Activated naive CD4-positive, alpha-beta T cell treated with anti-CD3 and anti-CD28 coated beads for 36 hours (primary cell): ENCODE measurements at regions of chr1 and their contacts with region 1.

Region 1: GRCh38 chr1:224851210-224851847 is 78.1 kb upstream of the DNAH14 start:
- DNase-seq: peak; percentile 74
- H3K4me3 Mint-ChIP-seq: no peak overlapping the region
- H3K27ac Mint-ChIP-seq: no peak overlapping the region
- H3K4me1 Mint-ChIP-seq: no peaks in the 10 kb centered on the region
- H3K27me3 Mint-ChIP-seq: peaks cover 6% of the 10 kb centered on the region

Region 2: DNA sequence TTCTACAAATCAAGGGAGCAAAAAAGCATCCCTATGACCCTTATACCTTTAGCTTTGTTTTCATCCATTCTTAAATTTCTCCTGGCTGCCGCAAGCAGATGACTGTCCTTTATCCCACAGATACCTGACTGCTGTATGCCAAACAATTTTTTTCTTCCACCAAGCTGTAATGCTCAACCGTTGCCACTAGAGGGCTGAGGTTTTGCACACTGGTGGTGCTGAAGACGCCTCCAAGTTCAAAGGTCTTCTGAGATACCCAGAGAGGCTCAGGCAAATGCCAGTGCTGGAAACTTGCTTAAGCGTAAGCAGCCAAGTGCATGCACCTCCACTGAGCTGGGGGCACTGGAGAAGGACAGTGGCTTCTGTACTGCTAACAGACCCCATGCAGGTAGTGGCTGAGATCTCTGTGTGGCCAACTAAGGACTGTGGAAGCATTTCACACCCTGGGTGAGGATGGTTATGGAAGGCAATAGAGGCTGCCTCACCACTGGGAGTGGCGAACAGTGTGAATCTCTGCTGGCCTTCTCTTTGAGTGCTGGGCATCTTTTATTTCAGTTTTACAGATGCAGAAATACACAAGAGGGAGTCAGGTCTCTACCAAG is 206.7 kb before region 1 on chr1:
- CTCF ChIA-PET with region 1: interaction called, 13 read pairs
- intact Hi-C with region 1: loop called (anchors 1 kb)
- DNase-seq: peak; percentile 72
- H3K4me3 Mint-ChIP-seq: no peak overlapping the region
- H3K27ac Mint-ChIP-seq: no peak overlapping the region
- H3K4me1 Mint-ChIP-seq: no peaks in the 10 kb centered on the region
- H3K27me3 Mint-ChIP-seq: no peaks in the 10 kb centered on the region

Region 3: GRCh38 chr1:224700915-224701531 is 150.3 kb before region 1 on chr1:
- CTCF ChIA-PET with region 1: interaction called, 13 read pairs
- intact Hi-C with region 1: loop called (anchors 1 kb)
- DNase-seq: peak; percentile 8
- H3K4me3 Mint-ChIP-seq: no peak overlapping the region
- H3K27ac Mint-ChIP-seq: no peak overlapping the region
- H3K4me1 Mint-ChIP-seq: no peaks in the 10 kb centered on the region
- H3K27me3 Mint-ChIP-seq: no peaks in the 10 kb centered on the region

Region 4: DNA sequence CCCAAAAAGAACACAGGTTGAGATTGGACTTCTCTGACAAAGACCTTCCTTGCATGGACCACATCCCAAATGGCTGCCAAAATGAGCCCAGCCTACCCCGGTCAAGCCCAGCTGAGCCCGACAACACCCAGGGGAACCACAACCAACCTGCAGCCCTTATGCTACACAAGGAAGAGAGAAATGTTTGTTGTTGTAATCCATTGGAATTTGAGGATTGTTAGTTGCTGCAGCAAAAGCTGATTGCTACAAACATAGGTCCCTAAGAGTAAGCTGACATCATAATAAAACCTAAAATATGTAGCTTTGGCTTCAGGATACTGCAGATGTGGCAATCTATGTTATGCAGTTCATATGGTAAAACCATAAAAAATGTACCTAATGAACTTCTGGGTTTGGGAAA is 12.6 kb after region 1 on chr1:
- CTCF ChIA-PET with region 1: interaction called, 13 read pairs
- intact Hi-C with region 1: no loop called
- DNase-seq: no peak
- H3K4me3 Mint-ChIP-seq: no peak overlapping the region
- H3K27ac Mint-ChIP-seq: no peak overlapping the region
- H3K4me1 Mint-ChIP-seq: no peaks in the 10 kb centered on the region
- H3K27me3 Mint-ChIP-seq: peaks cover 15% of the 10 kb centered on the region